Naive thymus-derived CD8-positive, alpha-beta T cell (primary cell): ENCODE measurements at regions of chr15 and their contacts with region 1.

Region 1: DNA sequence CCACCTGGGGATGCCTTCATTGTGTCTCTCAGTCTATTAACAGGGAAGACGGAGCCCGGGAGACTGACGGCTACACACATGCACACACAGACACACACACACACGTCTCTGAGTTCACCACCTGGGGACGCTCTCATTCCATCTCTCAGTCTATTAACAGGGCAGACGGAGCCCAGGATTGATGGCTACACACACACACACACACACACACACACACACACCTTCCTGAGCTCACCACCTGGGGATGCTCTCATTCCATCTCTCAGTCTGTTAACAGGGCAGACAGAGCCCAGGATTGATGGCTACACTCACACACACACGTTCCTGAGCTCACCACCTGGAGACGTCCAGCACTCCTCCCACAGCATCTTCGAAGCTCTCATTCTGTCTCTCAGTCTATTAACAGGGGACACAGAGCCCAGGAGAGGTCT is 143.9 kb downstream of the OR4M2 start:
- DNase-seq: no peak
- ATAC-seq: no peak
- H3K4me3 Mint-ChIP-seq: peak overlapping the region in 1 of 10 donors; percentile 45
- H3K27ac Mint-ChIP-seq: peak overlapping the region in 6 of 10 donors; percentile 15 to 88 (median 62)
- H3K4me1 Mint-ChIP-seq: peaks cover 18 to 40% (median 32%) of the 10 kb centered on the region in 4 donors
- H3K27me3 Mint-ChIP-seq: peaks cover 0 to 40% (median 9%) of the 10 kb centered on the region in 5 donors

Region 2: DNA sequence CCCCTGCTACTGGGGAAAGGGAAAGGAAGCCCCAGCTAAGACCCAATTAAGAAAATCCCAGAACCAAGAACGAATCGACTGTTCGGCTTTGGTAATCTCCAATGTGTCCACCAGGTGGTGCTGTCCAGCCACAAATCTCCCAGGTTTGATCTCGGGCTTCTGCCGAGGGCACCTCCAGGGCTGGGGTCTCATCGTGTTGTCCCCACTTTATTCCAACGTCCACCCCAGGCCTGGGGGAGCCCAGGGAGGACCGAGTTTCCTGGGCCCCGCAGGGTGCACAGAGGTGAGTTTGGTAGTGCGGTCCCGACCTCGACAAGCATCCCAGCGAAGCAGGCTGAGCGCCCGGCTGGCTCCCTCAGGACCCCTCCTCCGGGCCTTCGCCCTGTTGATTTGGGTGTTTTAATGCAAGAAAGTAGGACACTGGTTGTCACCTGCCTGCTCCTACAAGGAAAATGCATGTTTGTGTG is 1867.8 kb before region 1 on chr15:
- POLR2A ChIA-PET with region 1: interaction called, 17 read pairs
- DNase-seq: peak; percentile 57 to 92 (median 78)
- ATAC-seq: peak; percentile 73 to 94
- H3K4me3 Mint-ChIP-seq: peak overlapping the region in 6 of 10 donors; percentile 34 to 66 (median 50)
- H3K27ac Mint-ChIP-seq: peak overlapping the region in 9 of 10 donors; percentile 18 to 90 (median 77)
- H3K4me1 Mint-ChIP-seq: peaks cover 0 to 8% (median 6%) of the 10 kb centered on the region in 4 donors
- H3K27me3 Mint-ChIP-seq: peaks cover 0 to 20% (median 0%) of the 10 kb centered on the region in 5 donors

Region 3: GRCh38 chr15:22243440-22244130 is 19.3 kb after region 1 on chr15:
- POLR2A ChIA-PET with region 1: no interaction called
- DNase-seq: no peak
- ATAC-seq: no peak
- H3K4me3 Mint-ChIP-seq: no peak overlapping the region
- H3K27ac Mint-ChIP-seq: no peak overlapping the region
- H3K4me1 Mint-ChIP-seq: peaks cover 0 to 5% (median under 1%) of the 10 kb centered on the region in 4 donors
- H3K27me3 Mint-ChIP-seq: peaks cover 11 to 49% (median 26%) of the 10 kb centered on the region in 5 donors

Region 4: GRCh38 chr15:22253676-22254408 is 29.6 kb after region 1 on chr15:
- POLR2A ChIA-PET with region 1: no interaction called
- DNase-seq: no peak
- ATAC-seq: peak in 1 of 2 donors; percentile 32
- H3K4me3 Mint-ChIP-seq: peak overlapping the region in 7 of 10 donors; percentile 1 to 58 (median 5)
- H3K27ac Mint-ChIP-seq: no peak overlapping the region
- H3K4me1 Mint-ChIP-seq: peaks cover 7 to 35% (median 20%) of the 10 kb centered on the region in 4 donors
- H3K27me3 Mint-ChIP-seq: peaks cover 17 to 62% (median 34%) of the 10 kb centered on the region in 5 donors